Lower leg skin (tissue), 4 donors: ENCODE measurements at regions of chr19 and their contacts with region 1.

Region 1: GRCh38 chr19:17282488-17283255 is 971 bp downstream of the ANKLE1 start:
- DNase-seq: peak; percentile 58 to 95
- H3K4me3 ChIP-seq: no peak overlapping the region
- CTCF ChIP-seq: peak in 1 of 3 donors; percentile 83
- POLR2A ChIP-seq: no peak

Region 2: GRCh38 chr19:17058236-17058635 is 224.4 kb before region 1 on chr19:
- intact Hi-C with region 1: loop called (anchors 1 kb)
- DNase-seq: no peak
- H3K4me3 ChIP-seq: no peak overlapping the region
- CTCF ChIP-seq: no peak
- POLR2A ChIP-seq: no peak

Region 3: DNA sequence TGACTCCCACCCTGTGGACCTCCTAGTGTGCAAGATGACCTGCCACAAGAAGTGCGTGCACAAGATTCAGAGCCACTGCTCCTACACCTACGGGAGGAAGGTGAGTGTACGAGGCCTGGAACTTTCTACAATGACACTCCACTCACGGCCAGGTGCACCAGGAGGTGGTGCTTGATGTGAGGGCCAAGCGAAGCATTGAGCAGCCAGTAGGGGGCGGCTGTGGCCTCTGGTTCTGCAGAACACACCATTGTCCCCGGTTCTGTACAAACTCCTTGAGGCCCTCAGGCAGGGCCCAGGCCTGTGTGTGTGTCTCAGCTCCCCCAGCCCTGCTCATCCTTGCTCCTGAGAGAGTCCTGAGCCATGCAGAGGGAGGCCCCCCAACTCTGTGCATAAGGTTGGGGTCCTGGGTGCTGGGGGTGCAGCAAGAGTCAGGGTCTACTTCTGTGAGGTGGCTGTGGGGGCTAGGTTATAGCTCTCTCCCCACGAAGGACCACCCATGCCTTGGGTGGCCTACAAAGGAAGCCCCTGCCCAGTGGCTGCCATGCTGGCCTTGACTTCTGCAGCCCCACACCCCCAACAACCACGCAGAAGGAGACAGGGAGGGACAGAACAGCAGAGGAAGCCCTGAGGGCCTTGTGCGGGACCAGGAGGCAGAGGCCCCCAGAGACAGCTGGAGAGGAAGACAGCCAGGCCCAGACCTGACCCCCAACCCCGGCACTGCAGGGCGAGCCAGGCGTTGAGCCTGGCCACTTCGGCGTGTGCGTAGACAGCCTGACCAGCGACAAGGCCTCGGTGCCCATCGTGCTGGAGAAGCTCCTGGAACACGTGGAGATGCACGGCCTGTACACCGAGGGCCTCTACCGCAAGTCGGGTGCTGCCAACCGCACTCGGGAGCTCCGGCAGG is 77.2 kb before region 1 on chr19:
- intact Hi-C with region 1: loop called (anchors 10 kb)
- DNase-seq: no peak
- H3K4me3 ChIP-seq: no peak overlapping the region
- CTCF ChIP-seq: no peak
- POLR2A ChIP-seq: no peak

Region 4: DNA sequence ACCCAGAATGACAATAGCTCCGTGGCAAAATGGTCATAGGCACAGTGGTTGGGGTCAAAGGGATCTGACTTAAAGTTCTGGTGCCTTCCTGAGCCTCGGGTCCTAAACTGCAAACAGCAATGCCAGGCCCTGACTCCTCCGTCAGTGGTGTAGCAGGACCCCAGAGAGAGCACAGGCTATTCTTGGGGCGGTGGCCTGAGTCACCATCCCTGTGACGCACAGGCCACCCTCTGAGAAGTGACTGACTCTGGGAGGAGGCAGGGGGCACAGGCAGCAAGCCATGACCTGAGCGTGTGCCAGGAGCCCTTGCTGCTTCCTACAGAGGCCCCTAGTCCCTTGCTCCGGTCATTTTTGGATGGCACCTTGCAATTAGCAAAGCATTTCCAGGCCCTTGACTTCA is 75.7 kb after region 1 on chr19:
- intact Hi-C with region 1: no loop called
- DNase-seq: peak in 1 of 2 donors; percentile 47
- H3K4me3 ChIP-seq: no peak overlapping the region
- CTCF ChIP-seq: no peak
- POLR2A ChIP-seq: no peak

Region 5: GRCh38 chr19:17370026-17370587 is 87.4 kb after region 1 on chr19:
- intact Hi-C with region 1: no loop called
- DNase-seq: no peak
- H3K4me3 ChIP-seq: no peak overlapping the region
- CTCF ChIP-seq: no peak
- POLR2A ChIP-seq: no peak